Activated T-helper 1 cell treated with anti-CD3 and anti-CD28 coated beads, Interleukin-12 subunit alpha, Interleukin-12 subunit beta, Interleukin-2, Interleukin-4 antibody, amounts not matched to agents 30 ng/mL and 10 ng/mL and 1 ng/mL, durations not matched to agents 14 hours and 24 hours and 36 hours (primary cell): ENCODE measurements at regions of chr22 and their contacts with region 1.

Region 1: GRCh38 chr22:45268958-45269844 is 15.5 kb upstream of the UPK3A start:
- DNase-seq: peak; percentile 85
- H3K4me3 Mint-ChIP-seq: peak overlapping the region; percentile 77
- H3K27ac Mint-ChIP-seq: peak overlapping the region; percentile 91
- H3K4me1 Mint-ChIP-seq: peaks cover 12% of the 10 kb centered on the region
- H3K27me3 Mint-ChIP-seq: peaks cover 35% of the 10 kb centered on the region

Region 2: GRCh38 chr22:44620129-44620840 is 648.9 kb before region 1 on chr22:
- intact Hi-C with region 1: no loop called
- DNase-seq: peak; percentile 76
- H3K4me3 Mint-ChIP-seq: no peak overlapping the region
- H3K27ac Mint-ChIP-seq: peak overlapping the region; percentile 82
- H3K4me1 Mint-ChIP-seq: peaks cover 6% of the 10 kb centered on the region
- H3K27me3 Mint-ChIP-seq: peaks cover 2% of the 10 kb centered on the region

Region 3: GRCh38 chr22:45309472-45310227 is 40.4 kb after region 1 on chr22 and contains the start of gene FAM118A:
- intact Hi-C with region 1: loop called (anchors 2 kb)
- DNase-seq: peak; percentile 97
- H3K4me3 Mint-ChIP-seq: peak within 1 kb of the TSS; percentile 92
- H3K27ac Mint-ChIP-seq: peak within 1 kb of the TSS; percentile 93
- H3K4me1 Mint-ChIP-seq: peaks cover 44% of the 10 kb centered on the region
- H3K27me3 Mint-ChIP-seq: no peaks in the 10 kb centered on the region
- total RNA-seq, gene FAM118A: 30.7 and 38.6 TPM in 2 replicates

Region 4: DNA sequence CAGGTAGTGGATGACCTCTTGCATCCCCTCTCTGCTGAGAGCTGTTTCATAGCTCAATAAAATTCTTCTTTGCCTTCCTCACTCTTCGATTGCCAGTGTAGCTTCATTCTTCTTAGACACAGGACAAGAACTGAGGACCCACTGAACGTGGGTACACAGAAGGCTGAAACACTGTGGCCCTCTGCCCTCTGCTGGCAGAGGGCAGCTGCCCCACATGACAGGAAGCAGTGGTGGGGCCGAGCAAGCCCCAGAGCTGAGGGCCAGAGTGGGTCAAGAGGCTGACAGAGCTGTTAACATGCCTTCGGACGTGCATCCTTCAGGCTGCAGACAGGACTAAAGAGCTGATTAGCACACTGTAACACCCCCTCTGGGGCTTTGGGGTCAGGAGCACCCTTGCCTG is 128.6 kb after region 1 on chr22:
- intact Hi-C with region 1: loop called (anchors 2 kb)
- DNase-seq: no peak
- H3K4me3 Mint-ChIP-seq: no peak overlapping the region
- H3K27ac Mint-ChIP-seq: no peak overlapping the region
- H3K4me1 Mint-ChIP-seq: no peaks in the 10 kb centered on the region
- H3K27me3 Mint-ChIP-seq: peaks cover 10% of the 10 kb centered on the region

Region 5: DNA sequence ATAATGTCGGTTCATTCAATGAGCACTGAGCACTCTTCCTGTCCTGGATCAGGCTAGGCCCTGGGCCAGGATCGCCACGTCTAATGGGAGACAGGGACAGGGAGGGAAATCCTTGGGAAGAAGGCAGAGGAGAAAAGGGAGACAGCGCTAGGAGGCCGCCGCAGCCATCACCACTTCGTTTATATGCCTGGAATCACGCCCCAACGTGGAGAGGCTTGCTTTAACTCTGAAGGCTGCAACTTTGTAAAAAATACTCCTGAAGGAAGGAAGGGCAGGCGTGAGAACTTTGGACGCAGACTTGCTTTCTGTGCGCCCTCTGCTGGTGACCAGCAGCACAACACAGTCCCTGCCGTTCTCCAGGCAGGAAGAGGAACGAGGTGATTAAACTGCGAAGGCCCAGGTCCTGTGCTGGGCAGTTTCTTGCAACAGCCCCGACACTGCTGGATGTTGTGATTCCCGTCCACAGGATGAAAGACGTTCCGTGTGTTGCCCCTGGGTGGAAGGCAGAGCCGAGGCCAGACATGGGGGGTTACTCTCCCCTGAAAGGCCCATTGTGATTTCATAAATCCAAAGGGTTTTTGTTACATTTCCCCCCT is 166.4 kb after region 1 on chr22:
- intact Hi-C with region 1: loop called (anchors 1 kb)
- DNase-seq: peak; percentile 71
- H3K4me3 Mint-ChIP-seq: no peak overlapping the region
- H3K27ac Mint-ChIP-seq: peak overlapping the region; percentile 29
- H3K4me1 Mint-ChIP-seq: peaks cover 14% of the 10 kb centered on the region
- H3K27me3 Mint-ChIP-seq: peaks cover 8% of the 10 kb centered on the region